ENCODE measurements at regions of chr20 and their contacts with region 1.

Region 1: GRCh38 chr20:1437235-1437904 is 29.3 kb downstream of the NSFL1C start:
- DNase-seq: peak; percentile 75
- H3K4me3 ChIP-seq: no peak overlapping the region; a peak in 1 of 4 replicates
- H3K27ac ChIP-seq: no peak overlapping the region
- H3K4me1 ChIP-seq: no peaks in the 10 kb centered on the region
- H3K27me3 ChIP-seq: no peaks in the 10 kb centered on the region
- CTCF ChIP-seq: peak; percentile 92
- EP300 ChIP-seq: no peak
- RAD21 ChIP-seq: peak; percentile 92

Region 2: GRCh38 chr20:1313236-1313964 is 124.0 kb before region 1 on chr20:
- CTCF ChIA-PET with region 1: interaction called, 31 read pairs
- POLR2A ChIA-PET with region 1: no interaction called
- DNase-seq: peak; percentile 93
- H3K4me3 ChIP-seq: peak overlapping the region in 1 of 2 experiments; percentile 45; a peak in 1 of 4 replicates
- H3K27ac ChIP-seq: no peak overlapping the region
- H3K4me1 ChIP-seq: no peaks in the 10 kb centered on the region
- H3K27me3 ChIP-seq: no peaks in the 10 kb centered on the region
- CTCF ChIP-seq: peak; percentile 90
- EP300 ChIP-seq: no peak
- RAD21 ChIP-seq: peak; percentile 88

Region 3: GRCh38 chr20:1360094-1360846 is 77.1 kb before region 1 on chr20:
- CTCF ChIA-PET with region 1: interaction called, 13 read pairs
- POLR2A ChIA-PET with region 1: no interaction called
- DNase-seq: no peak
- H3K4me3 ChIP-seq: no peak overlapping the region
- H3K27ac ChIP-seq: no peak overlapping the region
- H3K4me1 ChIP-seq: no peaks in the 10 kb centered on the region; a peak in 2 of 4 replicates
- H3K27me3 ChIP-seq: no peaks in the 10 kb centered on the region
- CTCF ChIP-seq: no peak; the same call in 1 of the 2 replicates
- EP300 ChIP-seq: no peak
- RAD21 ChIP-seq: no peak

Region 4: GRCh38 chr20:1450926-1451491 is 13.6 kb after region 1 on chr20:
- CTCF ChIA-PET with region 1: interaction called, 24 read pairs
- POLR2A ChIA-PET with region 1: no interaction called
- DNase-seq: no peak
- H3K4me3 ChIP-seq: peak overlapping the region in 1 of 2 experiments; percentile 25; a peak in 1 of 4 replicates
- H3K27ac ChIP-seq: no peak overlapping the region
- H3K4me1 ChIP-seq: no peaks in the 10 kb centered on the region
- H3K27me3 ChIP-seq: no peaks in the 10 kb centered on the region
- CTCF ChIP-seq: no peak
- EP300 ChIP-seq: no peak
- RAD21 ChIP-seq: no peak

Region 5: GRCh38 chr20:2051946-2052345 is 614.6 kb after region 1 on chr20:
- CTCF ChIA-PET with region 1: no interaction called
- POLR2A ChIA-PET with region 1: no interaction called
- DNase-seq: peak; percentile 3
- H3K4me3 ChIP-seq: no peak overlapping the region
- H3K27ac ChIP-seq: no peak overlapping the region
- H3K4me1 ChIP-seq: no peaks in the 10 kb centered on the region
- H3K27me3 ChIP-seq: 0 out of 2 replicates have a peak, but pooled peaks cover 8% of the 10 kb centered on the region
- CTCF ChIP-seq: no peak
- EP300 ChIP-seq: no peak
- RAD21 ChIP-seq: no peak

Measured in SK-N-SH (cell line).